ENCODE measurements at regions of chr14 and their contacts with region 1.

Region 1: GRCh38 chr14:102795060-102795925 is 18.0 kb downstream of the TRAF3 start:
- DNase-seq: no peak
- ATAC-seq: peak; percentile 66
- H3K4me3 ChIP-seq: no peak overlapping the region
- H3K27ac ChIP-seq: peak overlapping the region; percentile 42
- H3K4me1 ChIP-seq: peaks cover 57% of the 10 kb centered on the region
- H3K27me3 ChIP-seq: no peaks in the 10 kb centered on the region
- CTCF ChIP-seq: no peak
- EP300 ChIP-seq: 0 out of 4 replicates have a peak, but pooled peaks of 1 of the 2 experiments have one; percentile 10
- POLR2A ChIP-seq: no peak
- RAD21 ChIP-seq: no peak

Region 2: DNA sequence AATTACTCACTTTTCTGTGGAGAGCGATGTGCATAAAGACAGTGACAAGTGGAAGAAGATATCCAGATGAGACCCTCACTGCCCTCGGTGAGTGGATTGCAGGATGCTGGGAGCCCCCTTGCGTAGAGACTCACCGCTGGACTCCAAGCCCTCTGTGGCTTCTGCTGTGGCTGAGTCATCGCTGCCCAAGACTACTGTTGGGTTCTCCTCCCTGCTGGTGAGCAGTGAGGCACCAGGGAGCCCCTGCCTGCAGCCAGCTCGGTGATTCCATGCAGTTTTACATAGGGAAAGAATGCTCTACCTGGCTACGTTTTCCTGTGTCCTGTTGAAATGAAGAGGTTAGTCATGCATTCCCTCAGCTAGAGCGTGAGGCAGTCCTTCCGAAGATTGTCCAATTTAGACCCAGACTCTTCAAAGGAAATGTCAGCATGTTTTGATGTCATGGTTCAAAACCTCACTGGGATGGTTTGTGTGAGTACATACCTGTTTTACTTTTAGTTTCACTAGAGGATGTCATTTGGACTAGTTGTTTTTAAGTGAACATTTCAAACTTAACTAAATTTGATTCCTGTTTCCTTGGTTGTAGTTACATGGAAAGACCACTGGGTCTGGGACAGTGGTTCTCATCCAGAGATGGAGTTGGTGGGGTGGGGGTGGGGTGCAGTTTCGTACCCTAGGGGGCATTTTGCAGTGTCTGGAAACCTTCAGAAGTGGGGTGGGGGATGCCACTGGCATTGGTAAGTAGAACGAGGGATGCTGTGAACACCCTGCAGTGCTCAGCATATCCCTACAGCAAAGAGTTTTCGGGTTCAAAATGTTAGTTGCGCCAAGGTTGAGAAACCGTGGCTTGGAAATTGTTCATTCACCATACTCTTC is 10.3 kb after region 1 on chr14:
- CTCF ChIA-PET with region 1: interaction called, 3 read pairs
- POLR2A ChIA-PET with region 1: interaction called, 10 read pairs
- RAD21 ChIA-PET with region 1: interaction called, 9 read pairs
- SMC1A ChIA-PET with region 1: interaction called, 23 read pairs
- in situ Hi-C with region 1: no loop called
- intact Hi-C with region 1: no loop called
- DNase-seq: no peak
- ATAC-seq: peak; percentile 73
- H3K4me3 ChIP-seq: peak overlapping the region; percentile 43; the same call in 1 of the 2 replicates
- H3K27ac ChIP-seq: peak overlapping the region; percentile 78
- H3K4me1 ChIP-seq: peaks cover 77% of the 10 kb centered on the region
- H3K27me3 ChIP-seq: no peaks in the 10 kb centered on the region
- CTCF ChIP-seq: 0 out of 6 replicates have a peak, but pooled peaks of 2 of the 3 experiments have one; percentile 0 to 7
- EP300 ChIP-seq: no peak
- POLR2A ChIP-seq: peak; percentile 25; the same call in 1 of the 2 replicates
- RAD21 ChIP-seq: no peak

Region 3: DNA sequence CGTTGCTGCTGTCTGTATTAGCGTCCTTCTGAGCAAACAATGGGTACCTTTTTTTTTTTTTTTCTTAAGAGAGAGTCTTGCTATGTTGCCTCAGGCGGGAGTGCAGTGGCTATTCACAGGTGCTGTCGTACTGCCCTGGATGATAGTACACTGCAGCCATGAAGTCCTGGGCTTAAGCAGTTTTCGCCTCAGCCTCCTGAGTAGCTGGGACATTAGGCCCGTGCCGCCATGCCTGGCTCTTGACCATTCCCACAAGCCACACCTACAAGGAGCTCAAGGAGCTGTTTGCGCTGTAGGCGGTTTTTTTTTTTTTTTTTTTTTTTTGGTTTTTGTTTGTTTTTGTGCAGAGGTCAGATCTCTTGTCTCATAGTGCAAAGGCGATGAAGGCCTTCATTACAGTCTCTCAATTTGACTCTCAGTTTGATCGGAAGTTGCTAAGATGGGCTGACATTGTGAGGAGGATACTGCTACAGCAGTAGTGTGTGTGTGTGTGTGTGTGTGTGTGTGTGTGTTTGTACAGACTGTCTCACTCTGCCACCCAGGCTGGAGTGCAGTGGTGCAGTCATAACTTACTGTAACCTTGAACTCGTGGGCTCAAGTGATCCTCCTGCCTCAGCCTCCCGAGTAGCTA is 16.1 kb after region 1 on chr14:
- CTCF ChIA-PET with region 1: interaction called, 4 read pairs
- POLR2A ChIA-PET with region 1: interaction called, 10 read pairs
- RAD21 ChIA-PET with region 1: interaction called, 9 read pairs
- SMC1A ChIA-PET with region 1: interaction called, 52 read pairs
- in situ Hi-C with region 1: no loop called
- intact Hi-C with region 1: no loop called
- DNase-seq: no peak
- ATAC-seq: peak; percentile 4; the same call in 2 of the 3 replicates
- H3K4me3 ChIP-seq: no peak overlapping the region
- H3K27ac ChIP-seq: peak overlapping the region; percentile 48
- H3K4me1 ChIP-seq: peaks cover 74% of the 10 kb centered on the region
- H3K27me3 ChIP-seq: no peaks in the 10 kb centered on the region
- CTCF ChIP-seq: no peak
- EP300 ChIP-seq: no peak
- POLR2A ChIP-seq: no peak
- RAD21 ChIP-seq: no peak

Measured in GM12878 (cell line).